Sciatic nerve (tissue), 2 donors: ENCODE measurements at regions of chr2 and their contacts with region 1.

Region 1: DNA sequence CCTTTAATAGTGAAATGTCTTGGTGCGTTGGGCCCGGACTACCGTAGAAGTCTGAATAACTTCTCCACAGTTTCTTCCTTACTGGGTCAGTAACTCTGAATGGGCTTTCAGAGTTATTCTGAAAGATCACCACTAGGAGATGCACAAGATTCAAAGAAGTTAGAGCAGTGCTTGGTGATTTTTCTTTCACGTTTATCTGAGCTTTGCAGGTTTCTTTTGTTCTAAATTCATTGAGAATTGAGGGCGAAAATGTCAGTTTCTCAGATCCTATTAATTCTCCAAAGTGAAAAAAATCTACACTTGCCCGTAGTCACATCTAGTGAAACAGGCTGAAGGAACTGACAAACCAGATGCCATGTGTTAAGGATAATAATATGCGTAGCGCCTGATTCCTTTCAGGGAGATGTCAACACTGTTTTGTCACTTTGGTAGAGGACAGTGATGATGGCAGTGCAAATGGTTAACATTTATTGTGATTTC is 70.1 kb downstream of the QPCT start:
- DNase-seq: no peak
- ATAC-seq: peak; percentile 91

Region 2: DNA sequence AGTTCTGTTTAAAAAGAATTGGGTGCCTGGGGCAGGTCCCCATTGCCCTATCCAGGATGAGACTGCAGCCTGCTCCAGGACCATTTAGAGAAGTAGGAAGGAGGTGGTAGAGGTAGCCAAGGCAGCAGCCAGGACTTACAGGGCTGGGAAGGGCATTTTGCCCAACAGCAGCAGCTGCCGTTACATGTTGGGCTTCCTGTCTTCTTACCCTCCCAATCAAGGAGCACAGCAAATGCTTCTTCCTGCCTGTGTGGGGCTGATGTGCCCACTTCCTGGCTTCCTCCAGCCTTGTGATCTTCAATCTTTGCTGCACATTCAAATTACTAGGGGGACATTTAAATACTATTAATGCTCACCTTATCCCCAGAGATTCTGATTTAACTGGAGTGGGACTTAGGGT is 42.0 kb after region 1 on chr2:
- intact Hi-C with region 1: no loop called
- DNase-seq: no peak
- ATAC-seq: no peak

Region 3: GRCh38 chr2:37832590-37833197 is 418.2 kb after region 1 on chr2:
- intact Hi-C with region 1: loop called (anchors 5 kb)
- DNase-seq: peak; percentile 96
- ATAC-seq: peak; percentile 94